Activated T-helper 1 cell treated with anti-CD3 and anti-CD28 coated beads, Interleukin-12 subunit alpha, Interleukin-12 subunit beta, Interleukin-2, Interleukin-4 antibody, amounts not matched to agents 30 ng/mL and 10 ng/mL and 1 ng/mL, durations not matched to agents 14 hours and 24 hours and 36 hours (primary cell): ENCODE measurements at regions of chr2 and their contacts with region 1.

Region 1: DNA sequence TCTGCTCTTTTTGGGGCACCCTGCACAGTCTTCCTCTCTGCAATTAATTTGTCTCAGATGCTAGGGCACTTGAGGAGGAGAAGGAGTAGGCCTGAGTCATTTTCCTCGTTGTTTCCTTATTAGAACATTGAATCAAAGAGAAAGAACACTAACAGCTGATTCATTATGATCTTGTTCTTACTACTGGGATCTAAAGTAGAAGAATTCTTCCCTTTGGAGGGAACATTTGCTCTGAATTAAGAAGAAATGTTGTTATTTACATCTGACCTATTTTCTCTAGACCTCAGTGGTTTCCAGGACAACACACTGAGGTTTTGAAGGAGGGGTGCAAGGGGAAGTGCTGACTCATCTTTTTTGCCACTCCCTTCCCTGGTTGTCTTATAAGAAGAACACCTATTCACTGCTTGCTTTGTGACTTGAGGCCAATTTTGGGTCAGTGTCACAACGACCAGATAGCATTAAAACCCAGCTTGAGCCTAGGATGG is 24.3 kb upstream of the STAT1 start:
- DNase-seq: peak; percentile 61
- H3K4me3 Mint-ChIP-seq: peak overlapping the region; percentile 63
- H3K27ac Mint-ChIP-seq: peak overlapping the region; percentile 79
- H3K4me1 Mint-ChIP-seq: peaks cover 48% of the 10 kb centered on the region
- H3K27me3 Mint-ChIP-seq: no peaks in the 10 kb centered on the region

Region 2: DNA sequence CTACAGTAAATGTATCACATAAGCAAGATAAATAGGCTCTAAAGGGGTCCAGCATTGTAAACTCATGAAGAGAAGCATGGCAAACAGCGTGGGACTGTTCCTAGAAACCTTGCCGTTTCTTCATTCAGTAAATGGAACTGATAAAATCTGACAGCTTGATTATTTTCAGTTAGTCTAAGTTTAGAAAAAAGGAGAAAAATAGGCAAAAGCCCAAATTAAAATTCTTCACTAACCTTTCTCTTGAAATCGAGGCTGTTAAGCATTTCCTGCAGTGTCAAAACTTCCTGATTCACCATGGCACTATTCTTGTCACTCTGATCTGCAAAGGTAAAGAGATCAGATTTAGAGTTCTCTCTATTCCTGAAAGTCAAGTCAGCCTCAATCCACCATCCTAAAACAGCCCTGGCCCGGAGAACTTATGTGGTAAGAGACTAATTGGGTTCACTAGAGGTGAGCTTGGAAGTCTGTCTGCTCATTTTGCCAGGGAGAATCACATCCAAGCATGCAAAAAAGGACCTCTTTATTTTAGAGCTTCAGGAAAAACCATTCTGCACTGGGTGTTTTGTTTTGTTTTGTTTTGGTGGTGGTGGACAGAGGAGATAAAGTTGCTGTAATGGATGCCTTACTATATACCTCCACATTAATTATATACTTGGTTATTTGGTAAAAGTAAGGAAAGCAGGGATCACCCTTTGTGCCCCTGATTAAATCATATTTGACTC is 28.1 kb after region 1 on chr2:
- intact Hi-C with region 1: loop called (anchors 2 kb)
- DNase-seq: no peak
- H3K4me3 Mint-ChIP-seq: peak overlapping the region; percentile 78
- H3K27ac Mint-ChIP-seq: peak overlapping the region; percentile 79
- H3K4me1 Mint-ChIP-seq: peaks cover 90% of the 10 kb centered on the region
- H3K27me3 Mint-ChIP-seq: no peaks in the 10 kb centered on the region

Region 3: GRCh38 chr2:191369036-191369435 is 330.8 kb after region 1 on chr2:
- intact Hi-C with region 1: no loop called
- DNase-seq: no peak
- H3K4me3 Mint-ChIP-seq: no peak overlapping the region
- H3K27ac Mint-ChIP-seq: no peak overlapping the region
- H3K4me1 Mint-ChIP-seq: no peaks in the 10 kb centered on the region
- H3K27me3 Mint-ChIP-seq: no peaks in the 10 kb centered on the region